Endothelial cell of umbilical vein (primary cell): ENCODE measurements at regions of chr11 and their contacts with region 1.

Region 1: GRCh38 chr11:105044921-105045524 is at the start of gene CARD16:
- DNase-seq: peak; percentile 74
- H3K4me3 ChIP-seq: peak within 1 kb of the TSS; percentile 36 to 83 (median 62)
- H3K27ac ChIP-seq: peak within 1 kb of the TSS; percentile 88
- H3K4me1 ChIP-seq: peaks cover 41% of the 10 kb centered on the region
- H3K27me3 ChIP-seq: no peaks in the 10 kb centered on the region
- CTCF ChIP-seq: no peak
- POLR2A ChIP-seq: no peak
- total RNA-seq, gene CARD16: 68.7 and 76.6 TPM in 2 replicates

Region 2: GRCh38 chr11:104758032-104758431 is 287.0 kb before region 1 on chr11:
- CTCF ChIA-PET with region 1: no interaction called
- POLR2A ChIA-PET with region 1: no interaction called
- dilution Hi-C with region 1: no loop called
- intact Hi-C with region 1: no loop called
- DNase-seq: no peak
- H3K4me3 ChIP-seq: no peak overlapping the region
- H3K27ac ChIP-seq: no peak overlapping the region
- H3K4me1 ChIP-seq: peaks cover 4% of the 10 kb centered on the region
- H3K27me3 ChIP-seq: no peaks in the 10 kb centered on the region
- CTCF ChIP-seq: no peak
- POLR2A ChIP-seq: no peak

Region 3: DNA sequence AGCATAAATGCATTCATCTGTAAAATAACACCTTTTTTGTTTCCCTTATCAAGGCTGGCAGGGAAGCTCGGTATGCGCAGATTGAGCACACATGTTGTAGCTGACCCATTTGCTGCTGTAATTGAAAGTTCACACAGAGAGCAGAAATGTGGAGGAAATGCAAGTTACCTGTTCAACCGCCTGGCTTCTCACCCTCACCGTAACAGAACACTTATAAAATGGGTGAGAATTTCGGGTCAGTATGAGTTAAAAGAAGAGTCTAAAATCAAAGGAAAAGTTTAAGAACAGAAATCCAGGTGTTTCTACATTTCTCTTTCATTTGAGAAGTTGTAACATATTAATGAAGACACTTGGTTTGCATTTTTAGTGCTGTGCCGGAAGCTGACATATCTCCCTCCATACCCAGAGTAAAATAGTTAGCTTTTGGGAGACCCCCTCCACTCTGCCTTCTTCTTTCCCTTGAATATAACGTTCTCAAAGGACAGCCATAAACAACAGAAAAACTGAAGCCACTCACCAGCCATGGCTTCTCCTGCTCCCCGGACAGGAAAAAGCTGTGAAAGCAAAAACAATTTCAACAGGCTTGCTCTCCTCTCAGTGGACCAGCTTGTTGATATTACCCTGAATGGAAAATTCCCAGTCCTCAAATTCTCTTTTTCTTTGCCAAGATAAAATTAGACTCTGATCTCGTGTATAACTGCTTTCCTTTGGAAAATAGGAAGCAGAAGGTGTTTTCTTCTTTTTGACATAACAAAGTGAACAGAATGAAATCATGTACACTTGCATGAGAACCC is 146.9 kb before region 1 on chr11 and contains the start of gene CASP12:
- CTCF ChIA-PET with region 1: no interaction called
- POLR2A ChIA-PET with region 1: no interaction called
- dilution Hi-C with region 1: no loop called
- intact Hi-C with region 1: loop called (anchors 2 kb)
- DNase-seq: peak; percentile 97
- H3K4me3 ChIP-seq: peak within 1 kb of the TSS in 2 of 3 experiments; percentile 23 to 41
- H3K27ac ChIP-seq: peak within 1 kb of the TSS; percentile 74
- H3K4me1 ChIP-seq: peaks cover 30% of the 10 kb centered on the region
- H3K27me3 ChIP-seq: no peaks in the 10 kb centered on the region
- CTCF ChIP-seq: no peak
- POLR2A ChIP-seq: peak; percentile 14
- total RNA-seq, gene CASP12: 2.6 and 3.9 TPM in 2 replicates

Region 4: GRCh38 chr11:105005446-105005845 is 39.6 kb before region 1 on chr11:
- CTCF ChIA-PET with region 1: interaction called, 3 read pairs
- POLR2A ChIA-PET with region 1: no interaction called
- dilution Hi-C with region 1: no loop called
- intact Hi-C with region 1: loop called (anchors 1 kb)
- DNase-seq: no peak
- H3K4me3 ChIP-seq: no peak overlapping the region
- H3K27ac ChIP-seq: peak overlapping the region; percentile 34
- H3K4me1 ChIP-seq: peaks cover 12% of the 10 kb centered on the region
- H3K27me3 ChIP-seq: no peaks in the 10 kb centered on the region
- CTCF ChIP-seq: no peak
- POLR2A ChIP-seq: no peak

Region 5: GRCh38 chr11:105132716-105133511 is 87.9 kb after region 1 on chr11:
- CTCF ChIA-PET with region 1: no interaction called
- POLR2A ChIA-PET with region 1: no interaction called
- dilution Hi-C with region 1: no loop called
- intact Hi-C with region 1: loop called (anchors 1 kb)
- DNase-seq: peak; percentile 78
- H3K4me3 ChIP-seq: no peak overlapping the region
- H3K27ac ChIP-seq: peak overlapping the region; percentile 20
- H3K4me1 ChIP-seq: peaks cover 2% of the 10 kb centered on the region
- H3K27me3 ChIP-seq: no peaks in the 10 kb centered on the region
- CTCF ChIP-seq: no peak
- POLR2A ChIP-seq: no peak

Region 6: DNA sequence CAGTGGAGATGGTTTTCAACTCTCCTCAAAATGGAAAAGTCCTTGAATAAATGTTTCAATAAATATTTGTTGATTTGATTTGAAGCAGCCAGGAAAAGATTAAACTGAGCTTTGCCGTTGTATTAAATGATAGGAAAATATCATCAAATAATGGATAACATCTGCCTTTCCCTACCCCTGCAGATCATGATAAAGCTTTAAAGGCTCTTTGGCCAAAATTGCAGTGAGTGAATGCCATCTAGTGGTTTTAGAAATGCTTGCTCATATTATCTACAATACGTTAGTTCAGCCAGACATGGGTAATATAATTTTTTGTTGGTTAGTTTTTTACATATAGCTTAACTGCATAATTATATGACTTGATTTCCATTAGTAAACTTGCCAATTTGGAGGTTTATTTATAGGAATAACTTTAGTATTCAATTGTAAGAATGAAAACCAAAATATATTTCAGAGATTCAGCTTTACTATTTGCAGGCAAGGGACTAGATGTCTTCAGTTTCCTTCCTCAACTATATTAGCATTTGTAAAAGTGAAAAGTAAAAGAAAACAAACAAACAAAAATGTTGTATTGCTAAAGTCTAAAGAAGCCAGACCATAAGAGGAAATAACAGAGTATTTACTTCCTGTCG is 817.8 kb after region 1 on chr11:
- CTCF ChIA-PET with region 1: no interaction called
- POLR2A ChIA-PET with region 1: no interaction called
- dilution Hi-C with region 1: no loop called
- intact Hi-C with region 1: loop called (anchors 5 kb)
- DNase-seq: peak; percentile 73
- H3K4me3 ChIP-seq: no peak overlapping the region
- H3K27ac ChIP-seq: no peak overlapping the region
- H3K4me1 ChIP-seq: no peaks in the 10 kb centered on the region
- H3K27me3 ChIP-seq: peaks cover 0 to 2% of the 10 kb centered on the region in 2 experiments
- CTCF ChIP-seq: peak; percentile 39 to 49
- POLR2A ChIP-seq: no peak